ENCODE measurements at regions of chr5 and their contacts with region 1.

Region 1: GRCh38 chr5:146959360-146959759 is 80.8 kb upstream of the PPP2R2B start:
- DNase-seq: no peak
- H3K4me3 ChIP-seq: no peak overlapping the region
- H3K27ac ChIP-seq: no peak overlapping the region
- H3K4me1 ChIP-seq: no peaks in the 10 kb centered on the region
- H3K27me3 ChIP-seq: no peaks in the 10 kb centered on the region
- CTCF ChIP-seq: no peak
- EP300 ChIP-seq: no peak
- RAD21 ChIP-seq: no peak

Region 2: DNA sequence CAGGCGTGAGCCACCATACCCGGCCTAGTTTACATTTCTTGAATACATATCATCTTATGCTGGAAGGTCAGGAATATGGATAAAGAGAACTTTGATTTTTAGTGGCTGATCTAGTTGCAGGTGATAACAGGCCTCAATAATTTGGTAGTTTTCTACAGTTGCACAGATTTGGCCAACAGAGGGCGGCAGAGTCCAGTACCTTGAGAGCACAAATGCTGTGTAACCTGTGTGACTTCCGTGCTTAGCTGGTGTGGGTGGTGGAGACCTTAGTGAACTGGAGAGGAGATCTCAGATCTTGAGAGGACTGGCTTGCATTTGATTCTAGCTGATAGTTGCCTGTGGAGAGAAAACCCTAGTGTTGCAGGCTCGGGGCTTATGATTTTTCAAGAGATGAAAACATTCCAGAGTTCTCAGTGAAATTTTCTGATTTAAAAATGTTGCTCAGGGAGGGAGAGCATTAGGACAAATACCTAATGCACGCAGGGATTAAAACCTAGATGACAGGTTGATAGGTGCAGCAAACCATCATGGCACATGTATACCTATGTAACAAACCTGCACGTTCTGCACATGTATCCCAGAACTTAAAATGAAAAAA is 426.0 kb before region 1 on chr5:
- CTCF ChIA-PET with region 1: interaction called, 176 read pairs
- POLR2A ChIA-PET with region 1: no interaction called
- DNase-seq: peak; percentile 71
- H3K4me3 ChIP-seq: no peak overlapping the region; a peak in 1 of 4 replicates
- H3K27ac ChIP-seq: no peak overlapping the region
- H3K4me1 ChIP-seq: no peaks in the 10 kb centered on the region
- H3K27me3 ChIP-seq: no peaks in the 10 kb centered on the region
- CTCF ChIP-seq: peak; percentile 93
- EP300 ChIP-seq: no peak
- RAD21 ChIP-seq: peak; percentile 95

Region 3: GRCh38 chr5:146541958-146542849 is 417.2 kb before region 1 on chr5:
- CTCF ChIA-PET with region 1: interaction called, 176 read pairs
- POLR2A ChIA-PET with region 1: no interaction called
- DNase-seq: peak; percentile 74
- H3K4me3 ChIP-seq: peak overlapping the region in 1 of 2 experiments; percentile 20; a peak in 1 of 4 replicates
- H3K27ac ChIP-seq: no peak overlapping the region
- H3K4me1 ChIP-seq: no peaks in the 10 kb centered on the region; a peak in 1 of 4 replicates
- H3K27me3 ChIP-seq: no peaks in the 10 kb centered on the region
- CTCF ChIP-seq: peak; percentile 94
- EP300 ChIP-seq: no peak
- RAD21 ChIP-seq: peak; percentile 96